Endothelial cell of umbilical vein (primary cell): ENCODE measurements at regions of chrX and their contacts with region 1.

Region 1: DNA sequence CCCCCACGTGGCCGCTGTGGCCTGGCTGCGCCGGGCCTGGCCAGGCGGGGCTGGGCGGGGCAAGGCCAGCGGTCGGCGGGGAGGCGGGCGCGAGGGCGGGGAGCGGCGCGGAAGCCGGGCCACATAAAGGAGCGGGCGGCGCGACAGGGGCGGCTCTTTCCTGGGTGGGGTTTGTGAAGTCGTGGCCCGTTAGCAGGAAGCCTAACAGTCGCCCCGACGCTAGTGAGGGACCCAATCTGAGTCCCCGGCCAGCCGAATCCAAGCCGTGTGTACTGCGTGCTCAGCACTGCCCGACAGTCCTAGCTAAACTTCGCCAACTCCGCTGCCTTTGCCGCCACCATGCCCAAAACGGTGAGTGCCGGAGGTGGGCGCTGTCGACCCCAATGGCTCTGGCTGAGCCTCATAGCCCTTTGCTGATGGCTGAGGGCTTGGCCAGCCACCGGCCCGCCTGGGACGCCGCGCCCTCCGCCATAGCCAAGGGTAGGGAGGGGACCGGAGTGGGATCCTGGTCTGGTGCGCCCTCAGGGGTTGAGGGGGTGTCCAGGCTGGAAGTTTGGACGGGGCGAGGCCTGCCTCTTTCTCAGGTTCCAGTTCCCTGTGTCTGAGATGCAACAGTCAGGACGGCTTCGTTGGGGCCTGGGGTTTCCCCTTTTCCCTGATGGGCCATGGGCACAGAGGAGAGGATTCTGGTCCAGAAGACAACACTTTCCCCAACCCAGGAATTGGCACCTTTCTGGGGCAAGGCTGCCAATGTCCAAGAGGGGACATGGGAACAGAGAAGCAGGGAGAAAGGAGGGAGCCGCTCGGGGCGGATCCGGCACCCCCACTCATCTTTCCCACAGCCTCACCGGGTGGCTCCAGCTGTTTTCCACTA is at the start of gene MSN:
- DNase-seq: peak; percentile 52
- H3K4me3 ChIP-seq: peak within 1 kb of the TSS; percentile 81 to 93 (median 87)
- H3K27ac ChIP-seq: peak within 1 kb of the TSS; percentile 94
- H3K4me1 ChIP-seq: peaks cover 19% of the 10 kb centered on the region
- H3K27me3 ChIP-seq: no peaks in the 10 kb centered on the region
- CTCF ChIP-seq: peak in 1 of 2 donors; percentile 30
- POLR2A ChIP-seq: peak; percentile 76
- total RNA-seq, gene MSN: 635 and 658 TPM in 2 replicates

Region 2: DNA sequence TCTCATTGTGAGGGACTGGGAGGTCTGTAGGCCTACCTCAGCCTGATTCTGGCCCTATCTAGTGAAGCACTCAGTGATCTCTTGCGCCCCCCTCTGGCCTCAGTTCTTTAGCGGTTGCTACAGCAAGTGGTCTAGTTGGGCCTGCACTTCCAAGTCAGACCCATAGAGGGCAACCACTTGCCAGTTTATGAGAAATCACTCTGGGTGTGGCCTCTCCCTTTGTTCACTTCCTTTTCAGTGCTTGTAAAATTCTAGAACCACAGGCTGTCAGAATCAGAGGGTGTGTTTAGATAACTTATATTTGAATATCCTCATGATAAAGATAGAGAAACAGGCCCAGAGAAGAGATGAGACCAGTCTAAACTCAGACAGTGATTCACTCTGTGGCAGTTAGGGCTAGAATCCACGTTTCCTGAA is 72.3 kb before region 1 on chrX:
- CTCF ChIA-PET with region 1: interaction called, 7 read pairs
- POLR2A ChIA-PET with region 1: interaction called, 4 read pairs
- dilution Hi-C with region 1: no loop called
- intact Hi-C with region 1: loop called (anchors 1 kb)
- DNase-seq: peak; percentile 90
- H3K4me3 ChIP-seq: no peak overlapping the region
- H3K27ac ChIP-seq: peak overlapping the region; percentile 92
- H3K4me1 ChIP-seq: peaks cover 28% of the 10 kb centered on the region
- H3K27me3 ChIP-seq: no peaks in the 10 kb centered on the region
- CTCF ChIP-seq: peak; percentile 88 to 98
- POLR2A ChIP-seq: no peak

Region 3: GRCh38 chrX:65601530-65602220 is 66.1 kb before region 1 on chrX:
- CTCF ChIA-PET with region 1: interaction called, 7 read pairs
- POLR2A ChIA-PET with region 1: interaction called, 5 read pairs
- dilution Hi-C with region 1: no loop called
- intact Hi-C with region 1: loop called (anchors 1 kb)
- DNase-seq: peak; percentile 97
- H3K4me3 ChIP-seq: no peak overlapping the region
- H3K27ac ChIP-seq: peak overlapping the region; percentile 96
- H3K4me1 ChIP-seq: peaks cover 44% of the 10 kb centered on the region
- H3K27me3 ChIP-seq: no peaks in the 10 kb centered on the region
- CTCF ChIP-seq: no peak
- POLR2A ChIP-seq: peak; percentile 41

Region 4: GRCh38 chrX:65644621-65645270 is 23.0 kb before region 1 on chrX:
- CTCF ChIA-PET with region 1: interaction called, 5 read pairs
- POLR2A ChIA-PET with region 1: interaction called, 4 read pairs
- dilution Hi-C with region 1: no loop called
- intact Hi-C with region 1: loop called (anchors 2 kb)
- DNase-seq: peak; percentile 90
- H3K4me3 ChIP-seq: no peak overlapping the region
- H3K27ac ChIP-seq: peak overlapping the region; percentile 70
- H3K4me1 ChIP-seq: peaks cover 22% of the 10 kb centered on the region
- H3K27me3 ChIP-seq: no peaks in the 10 kb centered on the region
- CTCF ChIP-seq: no peak
- POLR2A ChIP-seq: no peak

Region 5: DNA sequence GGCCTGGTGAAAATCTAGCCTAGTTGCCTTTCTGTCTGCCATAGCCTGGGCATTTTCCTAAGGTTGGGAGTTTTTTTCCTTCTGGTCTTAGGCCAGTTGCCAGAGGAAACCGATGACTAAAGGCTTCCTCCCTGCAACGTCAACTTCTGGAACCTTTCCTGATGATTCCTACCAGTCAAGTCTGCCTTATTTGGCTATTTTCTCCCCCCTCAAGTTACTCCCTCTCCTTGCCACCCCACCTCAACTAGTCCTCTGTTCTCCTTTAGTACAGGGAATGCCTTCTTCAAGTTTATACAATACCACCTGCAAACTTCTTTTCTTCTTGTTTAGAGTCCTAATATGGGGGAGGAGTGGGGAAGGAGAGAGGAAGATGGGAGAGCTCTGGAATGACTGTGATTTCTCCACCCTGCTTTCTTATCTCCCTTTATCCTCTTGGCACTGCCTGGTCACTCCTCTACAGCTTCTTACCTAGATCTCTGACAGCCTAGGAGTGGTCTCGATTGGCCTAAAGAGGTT is 10.3 kb after region 1 on chrX:
- CTCF ChIA-PET with region 1: interaction called, 7 read pairs
- POLR2A ChIA-PET with region 1: interaction called, 10 read pairs
- dilution Hi-C with region 1: no loop called
- intact Hi-C with region 1: loop called (anchors 1 kb)
- DNase-seq: peak; percentile 94
- H3K4me3 ChIP-seq: peak overlapping the region in 1 of 3 experiments; percentile 23
- H3K27ac ChIP-seq: peak overlapping the region; percentile 94
- H3K4me1 ChIP-seq: peaks cover 78% of the 10 kb centered on the region
- H3K27me3 ChIP-seq: no peaks in the 10 kb centered on the region
- CTCF ChIP-seq: no peak
- POLR2A ChIP-seq: peak; percentile 4

Region 6: GRCh38 chrX:65720381-65720964 is 52.7 kb after region 1 on chrX:
- CTCF ChIA-PET with region 1: no interaction called
- POLR2A ChIA-PET with region 1: interaction called, 4 read pairs
- dilution Hi-C with region 1: no loop called
- intact Hi-C with region 1: loop called (anchors 1 kb)
- DNase-seq: peak; percentile 75
- H3K4me3 ChIP-seq: no peak overlapping the region
- H3K27ac ChIP-seq: peak overlapping the region; percentile 89
- H3K4me1 ChIP-seq: peaks cover 50% of the 10 kb centered on the region
- H3K27me3 ChIP-seq: no peaks in the 10 kb centered on the region
- CTCF ChIP-seq: peak; percentile 3 to 6
- POLR2A ChIP-seq: no peak

Region 7: GRCh38 chrX:65985922-65986588 is 318.3 kb after region 1 on chrX:
- CTCF ChIA-PET with region 1: no interaction called
- POLR2A ChIA-PET with region 1: no interaction called
- dilution Hi-C with region 1: no loop called
- intact Hi-C with region 1: loop called (anchors 5 kb)
- DNase-seq: peak; percentile 49
- H3K4me3 ChIP-seq: no peak overlapping the region
- H3K27ac ChIP-seq: no peak overlapping the region
- H3K4me1 ChIP-seq: no peaks in the 10 kb centered on the region
- H3K27me3 ChIP-seq: no peaks in the 10 kb centered on the region
- CTCF ChIP-seq: peak; percentile 16 to 25
- POLR2A ChIP-seq: no peak